Esophagus muscularis mucosa (tissue), 4 donors: ENCODE measurements at regions of chr7 and their contacts with region 1.

Region 1: DNA sequence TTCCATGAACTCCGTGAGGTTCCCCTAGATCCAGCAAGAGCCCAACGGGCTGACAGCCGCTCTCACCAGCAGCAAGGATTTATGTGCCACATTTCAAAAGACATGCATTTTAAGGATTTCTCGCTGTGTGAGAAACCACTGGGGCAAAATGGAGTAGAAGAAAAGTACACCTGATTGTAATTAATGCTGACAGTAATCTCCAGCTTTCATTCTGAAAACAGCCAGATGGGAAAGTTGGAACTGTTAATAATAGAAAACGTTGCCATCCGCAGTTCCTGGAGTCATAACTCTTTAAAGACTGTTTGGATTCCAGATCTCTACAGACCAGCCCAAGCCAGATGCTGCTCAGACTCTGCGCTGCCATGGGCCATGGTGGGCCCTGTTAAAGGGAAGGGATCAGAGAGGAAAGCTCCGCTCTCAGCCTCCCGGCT is 216.9 kb upstream of the GLI3 start:
- DNase-seq: peak; percentile 90
- H3K4me3 ChIP-seq: no peak overlapping the region
- H3K27ac ChIP-seq: peak overlapping the region in 1 of 4 donors; percentile 54
- H3K4me1 ChIP-seq: peaks cover 0 to 25% (median 16%) of the 10 kb centered on the region in 4 donors
- H3K27me3 ChIP-seq: no peaks in the 10 kb centered on the region
- CTCF ChIP-seq: no peak
- EP300 ChIP-seq: no peak
- POLR2A ChIP-seq: no peak

Region 2: GRCh38 chr7:42272793-42273665 is 180.9 kb before region 1 on chr7:
- intact Hi-C with region 1: loop called (anchors 10 kb)
- DNase-seq: no peak
- H3K4me3 ChIP-seq: no peak overlapping the region
- H3K27ac ChIP-seq: no peak overlapping the region
- H3K4me1 ChIP-seq: no peaks in the 10 kb centered on the region
- H3K27me3 ChIP-seq: no peaks in the 10 kb centered on the region
- CTCF ChIP-seq: peak; percentile 12 to 38 (median 20)
- EP300 ChIP-seq: no peak
- POLR2A ChIP-seq: no peak